ENCODE measurements at regions of chr17 and their contacts with region 1.

Region 1: DNA sequence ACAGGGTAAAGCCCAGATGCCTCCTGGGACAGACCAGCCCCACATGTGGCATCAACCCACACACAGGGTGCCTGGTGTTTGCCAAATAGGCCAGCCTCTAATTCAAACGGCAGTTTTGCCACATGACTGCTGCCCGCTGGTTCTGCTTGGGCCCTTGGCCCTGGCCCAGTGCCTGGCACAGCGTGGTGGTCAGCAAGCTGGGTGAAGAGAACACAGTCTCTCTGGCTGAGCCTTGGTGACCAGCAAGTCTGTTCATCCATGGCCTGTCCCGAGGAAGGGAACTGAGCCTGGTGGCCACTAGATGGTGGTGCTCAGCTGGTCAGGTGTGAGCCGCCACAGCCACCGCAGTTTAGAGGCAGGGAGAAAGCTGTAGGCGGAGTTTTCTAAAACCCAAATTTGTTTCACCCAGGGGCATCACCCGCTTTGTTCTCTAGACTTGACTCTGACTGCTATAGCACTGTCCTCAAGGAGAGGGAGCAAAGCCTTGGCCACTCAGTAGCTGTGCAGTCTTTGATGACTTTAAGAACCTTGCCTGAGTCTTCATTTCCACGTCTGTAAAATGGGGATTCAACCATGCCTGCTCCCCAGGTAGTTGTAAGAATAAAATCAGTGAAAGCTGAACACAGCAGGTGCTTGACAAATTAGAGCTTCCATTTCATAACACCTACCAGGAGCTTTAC is 4.7 kb upstream of the GFAP start:
- DNase-seq: peak; percentile 77 to 86 (median 84)
- H3K4me3 ChIP-seq: no peak overlapping the region
- H3K27ac ChIP-seq: no peak overlapping the region
- H3K4me1 ChIP-seq: no peaks in the 10 kb centered on the region
- H3K27me3 ChIP-seq: no peaks in the 10 kb centered on the region
- CTCF ChIP-seq: peak; percentile 52 to 91 (median 84)
- EP300 ChIP-seq: no peak
- POLR2A ChIP-seq: no peak

Region 2: GRCh38 chr17:44758414-44759085 is 161.5 kb before region 1 on chr17 and contains the start of gene ADAM11:
- intact Hi-C with region 1: no loop called
- DNase-seq: no peak
- H3K4me3 ChIP-seq: peak within 1 kb of the TSS; percentile 37
- H3K27ac ChIP-seq: no peak within 1 kb of the TSS
- H3K4me1 ChIP-seq: peaks cover 4% of the 10 kb centered on the region
- H3K27me3 ChIP-seq: no peaks in the 10 kb centered on the region
- CTCF ChIP-seq: no peak
- EP300 ChIP-seq: no peak
- POLR2A ChIP-seq: no peak
- total RNA-seq, gene ADAM11: 0.12 to 2.3 (median 1.5) TPM

Region 3: GRCh38 chr17:45021607-45022287 is 101.7 kb after region 1 on chr17:
- intact Hi-C with region 1: loop called (anchors 2 to 5 kb)
- DNase-seq: peak; percentile 73 to 85 (median 79)
- H3K4me3 ChIP-seq: peak overlapping the region; percentile 30
- H3K27ac ChIP-seq: peak overlapping the region; percentile 60 to 79
- H3K4me1 ChIP-seq: peaks cover 9% of the 10 kb centered on the region
- H3K27me3 ChIP-seq: no peaks in the 10 kb centered on the region
- CTCF ChIP-seq: peak; percentile 86 to 97 (median 97)
- EP300 ChIP-seq: no peak
- POLR2A ChIP-seq: no peak

Region 4: DNA sequence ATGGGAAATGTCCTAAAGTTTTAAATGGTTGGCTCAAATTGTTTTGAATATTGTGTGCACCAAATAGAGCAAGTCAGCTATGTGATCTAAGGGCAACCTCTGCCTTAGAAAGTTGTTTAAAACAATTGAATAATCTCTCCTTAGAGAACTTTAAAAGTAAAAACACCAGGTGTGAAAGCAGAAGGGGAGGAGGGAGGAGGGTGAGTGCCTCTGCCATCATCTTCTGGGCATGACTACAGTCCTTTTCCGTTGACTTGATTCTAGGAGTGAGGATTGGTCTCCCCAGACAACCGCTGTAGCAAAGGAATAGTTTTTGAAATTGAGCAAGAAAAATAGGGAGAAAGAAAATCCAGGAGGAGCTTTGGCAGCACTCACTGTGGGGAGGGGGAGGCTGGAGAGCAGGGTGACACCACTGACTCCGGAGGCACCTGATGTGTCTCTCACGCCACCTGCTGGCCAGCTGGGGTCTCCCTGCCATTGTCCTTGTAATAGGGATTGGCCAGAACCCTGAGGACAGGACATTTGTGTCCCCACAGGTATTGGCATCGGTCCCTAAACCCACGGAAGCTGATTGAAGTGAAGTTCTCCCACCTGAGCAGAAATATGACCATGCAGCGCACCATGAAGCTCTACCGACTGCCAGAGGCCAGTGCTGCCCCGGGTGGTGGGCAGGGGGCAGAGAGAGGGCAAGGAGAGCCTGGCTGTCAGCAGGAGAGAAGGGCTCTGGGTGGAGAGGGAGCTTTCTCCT is 179.0 kb after region 1 on chr17:
- intact Hi-C with region 1: loop called in 2 of 4 experiments (anchors 2 to 10 kb)
- DNase-seq: peak; percentile 83 to 93 (median 90)
- H3K4me3 ChIP-seq: no peak overlapping the region
- H3K27ac ChIP-seq: peak overlapping the region in 1 of 2 donors; percentile 47
- H3K4me1 ChIP-seq: peaks cover 10% of the 10 kb centered on the region
- H3K27me3 ChIP-seq: no peaks in the 10 kb centered on the region
- CTCF ChIP-seq: peak; percentile 65 to 79 (median 66)
- EP300 ChIP-seq: no peak
- POLR2A ChIP-seq: no peak

Region 5: DNA sequence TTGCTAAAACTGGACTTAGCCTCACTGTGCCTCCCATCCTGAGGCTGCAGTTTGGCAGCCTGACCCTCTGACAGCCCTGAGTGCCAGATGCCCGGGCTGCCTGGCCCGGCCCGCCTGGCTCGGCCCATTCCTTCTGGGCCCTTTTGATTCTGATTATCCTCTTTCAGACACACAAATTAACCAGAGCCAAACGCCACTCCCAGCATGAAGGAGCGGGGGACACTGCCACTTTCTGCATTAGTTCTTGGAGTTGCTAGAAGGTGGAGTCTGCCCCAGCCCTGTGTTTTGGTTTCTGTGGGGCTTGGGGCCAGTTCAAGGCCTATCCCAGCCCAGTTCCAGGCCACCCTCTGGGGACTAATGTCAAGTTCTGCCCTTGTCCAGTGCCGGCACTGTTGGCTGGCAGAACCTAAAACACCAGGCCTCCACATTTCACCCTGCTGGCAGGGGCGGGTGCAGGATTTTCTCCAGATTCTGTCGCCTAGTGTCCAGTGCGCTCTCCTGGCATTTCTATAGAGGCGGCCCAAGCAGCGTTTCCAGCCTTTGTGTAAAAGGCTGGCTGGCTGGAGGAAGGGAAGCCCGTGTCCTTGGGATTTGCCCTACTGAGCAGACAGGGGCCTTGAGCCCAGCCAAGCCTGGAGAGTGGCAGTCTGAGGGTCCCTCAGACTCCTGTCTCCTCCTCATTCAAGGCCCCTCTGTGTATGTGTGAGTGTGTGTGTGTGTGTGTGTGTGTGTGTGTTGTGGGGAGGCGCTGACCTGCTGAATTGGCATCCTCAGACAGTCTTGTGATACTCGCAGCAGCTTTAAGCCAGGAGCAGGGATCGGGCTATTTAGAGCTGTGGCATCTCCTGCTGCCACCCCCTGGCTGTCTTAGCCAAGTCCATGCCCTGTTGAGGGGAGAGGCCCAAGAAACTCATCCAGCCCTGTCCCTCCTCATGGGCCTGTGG is 190.9 kb after region 1 on chr17:
- intact Hi-C with region 1: loop called in 1 of 4 experiments (anchors 10 kb)
- DNase-seq: peak; percentile 52 to 67 (median 63)
- H3K4me3 ChIP-seq: no peak overlapping the region
- H3K27ac ChIP-seq: peak overlapping the region; percentile 39 to 71
- H3K4me1 ChIP-seq: peaks cover 9% of the 10 kb centered on the region
- H3K27me3 ChIP-seq: no peaks in the 10 kb centered on the region
- CTCF ChIP-seq: no peak
- EP300 ChIP-seq: no peak
- POLR2A ChIP-seq: no peak

Region 6: GRCh38 chr17:45123930-45124796 is 204.1 kb after region 1 on chr17:
- intact Hi-C with region 1: loop called in 2 of 4 experiments (anchors 10 kb)
- DNase-seq: peak; percentile 71 to 81 (median 78)
- H3K4me3 ChIP-seq: no peak overlapping the region
- H3K27ac ChIP-seq: peak overlapping the region; percentile 25 to 47
- H3K4me1 ChIP-seq: peaks cover 27% of the 10 kb centered on the region
- H3K27me3 ChIP-seq: no peaks in the 10 kb centered on the region
- CTCF ChIP-seq: no peak
- EP300 ChIP-seq: no peak
- POLR2A ChIP-seq: no peak

Region 7: DNA sequence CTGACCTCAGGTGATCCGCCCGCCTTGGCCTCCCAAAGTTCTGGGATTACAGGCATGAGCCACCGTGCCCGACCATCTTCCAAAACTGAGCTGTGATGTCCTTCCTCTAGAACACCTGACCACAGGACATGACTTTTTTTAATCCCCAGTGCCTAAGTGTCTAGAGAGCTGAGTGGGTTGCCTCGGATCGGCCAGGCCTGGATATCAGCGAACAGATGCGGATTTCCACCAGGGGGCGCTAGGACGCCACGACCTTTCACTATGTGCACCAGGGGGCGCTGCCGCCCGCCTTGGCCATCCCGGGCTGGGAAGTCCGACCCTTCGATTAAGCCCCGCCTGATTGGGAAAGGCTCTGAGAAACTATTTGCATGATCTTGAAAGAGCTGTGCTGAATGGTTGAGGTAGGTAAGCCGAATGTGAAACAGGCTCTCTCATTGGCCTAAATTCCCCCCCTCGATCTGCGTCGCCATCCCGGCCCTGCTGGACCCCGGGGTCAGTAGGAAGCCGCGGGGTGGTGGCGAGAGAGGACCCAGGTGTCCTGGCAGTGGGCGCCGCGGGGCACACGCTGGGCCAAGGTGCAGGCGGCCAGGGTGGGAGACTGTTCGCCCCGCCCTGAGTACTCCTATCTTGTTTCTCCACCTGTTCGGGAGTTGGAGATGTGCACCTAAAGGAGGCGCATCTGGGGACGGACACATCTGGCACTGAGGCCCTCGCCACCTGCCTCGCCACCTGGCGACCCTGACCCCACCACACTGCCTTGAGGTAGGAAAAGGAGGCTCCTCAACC is 215.4 kb after region 1 on chr17 and contains the start of gene ACBD4:
- intact Hi-C with region 1: loop called in 1 of 4 experiments (anchors 5 kb)
- DNase-seq: peak; percentile 94 to 98 (median 97)
- H3K4me3 ChIP-seq: peak within 1 kb of the TSS; percentile 76
- H3K27ac ChIP-seq: peak within 1 kb of the TSS; percentile 65 to 81
- H3K4me1 ChIP-seq: peaks cover 2% of the 10 kb centered on the region
- H3K27me3 ChIP-seq: no peaks in the 10 kb centered on the region
- CTCF ChIP-seq: peak; percentile 100
- EP300 ChIP-seq: no peak
- POLR2A ChIP-seq: peak; percentile 69
- total RNA-seq, gene ACBD4: 12.4 to 24.0 (median 18.5) TPM

Region 8: DNA sequence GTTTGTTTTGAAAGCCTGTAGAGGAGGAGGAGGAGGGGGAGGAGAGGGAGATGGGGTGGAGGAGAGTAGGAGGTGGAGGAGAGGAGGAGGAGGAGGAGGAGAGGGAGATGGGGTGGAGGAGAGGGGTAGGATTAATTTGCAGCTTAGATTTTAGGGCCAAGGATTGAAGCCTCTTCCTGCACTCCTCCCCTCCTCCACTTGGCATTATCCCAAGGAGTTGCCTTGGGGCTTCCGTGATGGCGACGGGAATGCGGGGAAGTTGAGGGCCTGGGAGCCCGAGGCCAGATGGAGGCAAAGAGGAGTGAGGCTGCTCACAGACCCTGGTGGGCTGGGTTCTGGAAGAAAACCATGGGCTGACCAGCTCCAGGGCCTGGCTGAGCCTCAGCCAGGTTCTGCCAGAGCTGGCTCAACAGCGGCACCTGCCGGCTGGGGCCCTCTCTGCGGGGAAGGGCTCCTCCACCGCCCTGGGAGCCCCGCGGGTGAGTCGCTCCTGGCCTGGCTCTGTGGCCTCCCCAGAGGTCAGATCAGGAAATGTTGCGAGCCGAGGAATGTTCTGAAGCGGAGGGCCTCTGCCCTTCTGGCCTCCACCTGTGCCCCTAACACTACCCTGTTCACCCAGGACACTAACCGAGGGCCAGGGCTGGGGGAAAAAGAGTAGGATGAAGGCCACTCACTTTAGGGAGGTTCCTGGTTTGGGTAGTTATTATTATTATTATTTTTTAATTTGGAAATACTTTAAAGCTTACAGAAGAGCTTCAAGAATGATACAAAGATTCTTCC is 277.7 kb after region 1 on chr17:
- intact Hi-C with region 1: loop called in 2 of 4 experiments (anchors 5 to 10 kb)
- DNase-seq: peak; percentile 85 to 93 (median 91)
- H3K4me3 ChIP-seq: no peak overlapping the region
- H3K27ac ChIP-seq: no peak overlapping the region
- H3K4me1 ChIP-seq: peaks cover 4% of the 10 kb centered on the region
- H3K27me3 ChIP-seq: no peaks in the 10 kb centered on the region
- CTCF ChIP-seq: peak; percentile 94 to 98 (median 96)
- EP300 ChIP-seq: no peak
- POLR2A ChIP-seq: no peak